ENCODE measurements at regions of chr4 and their contacts with region 1.

Region 1: GRCh38 chr4:186752325-186752724 is 28.7 kb upstream of the FAT1 start:
- DNase-seq: no peak
- H3K4me3 ChIP-seq: no peak overlapping the region
- H3K27ac ChIP-seq: no peak overlapping the region
- H3K27me3 ChIP-seq: no peaks in the 10 kb centered on the region
- CTCF ChIP-seq: no peak

Region 2: GRCh38 chr4:186912606-186913005 is 160.3 kb after region 1 on chr4:
- CTCF ChIA-PET with region 1: interaction called, 11 read pairs
- POLR2A ChIA-PET with region 1: no interaction called
- DNase-seq: no peak
- H3K4me3 ChIP-seq: no peak overlapping the region
- H3K27ac ChIP-seq: no peak overlapping the region
- H3K27me3 ChIP-seq: no peaks in the 10 kb centered on the region
- CTCF ChIP-seq: no peak

Measured in AG04450 (cell line).